ENCODE measurements at regions of chr13 and their contacts with region 1.

Region 1: GRCh38 chr13:65468628-65469027 is 1761.5 kb downstream of the PCDH9 start:
- DNase-seq: no peak
- ATAC-seq: peak; percentile 46; the same call in 2 of the 3 replicates
- H3K4me3 ChIP-seq: no peak overlapping the region
- H3K27ac ChIP-seq: no peak overlapping the region
- H3K4me1 ChIP-seq: no peaks in the 10 kb centered on the region
- H3K27me3 ChIP-seq: no peaks in the 10 kb centered on the region
- CTCF ChIP-seq: no peak
- EP300 ChIP-seq: no peak
- POLR2A ChIP-seq: no peak
- RAD21 ChIP-seq: no peak

Region 2: DNA sequence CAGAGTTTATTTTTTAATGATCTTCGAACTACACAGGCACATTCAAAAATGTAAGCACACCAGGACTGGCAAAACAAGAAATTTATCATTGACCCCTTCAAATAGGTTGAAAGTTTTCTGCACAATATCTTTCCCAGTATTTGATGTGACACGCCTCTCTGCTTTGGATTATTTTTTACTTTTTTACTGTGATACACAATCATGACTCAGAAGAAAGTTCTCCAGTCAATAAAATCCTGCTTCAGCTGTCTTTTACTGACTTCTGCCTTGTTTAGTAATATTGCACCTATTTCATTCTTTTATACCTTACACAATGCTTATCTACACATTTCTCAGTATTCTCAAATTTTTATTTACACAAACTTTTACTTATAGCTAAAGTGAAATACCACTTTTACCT is 11.1 kb after region 1 on chr13:
- CTCF ChIA-PET with region 1: interaction called, 4 read pairs
- POLR2A ChIA-PET with region 1: no interaction called
- RAD21 ChIA-PET with region 1: no interaction called
- SMC1A ChIA-PET with region 1: interaction called, 10 read pairs
- in situ Hi-C with region 1: no loop called
- intact Hi-C with region 1: no loop called
- DNase-seq: no peak
- ATAC-seq: no peak
- H3K4me3 ChIP-seq: no peak overlapping the region
- H3K27ac ChIP-seq: no peak overlapping the region
- H3K4me1 ChIP-seq: no peaks in the 10 kb centered on the region
- H3K27me3 ChIP-seq: no peaks in the 10 kb centered on the region
- CTCF ChIP-seq: no peak
- EP300 ChIP-seq: no peak
- POLR2A ChIP-seq: no peak
- RAD21 ChIP-seq: no peak

Region 3: DNA sequence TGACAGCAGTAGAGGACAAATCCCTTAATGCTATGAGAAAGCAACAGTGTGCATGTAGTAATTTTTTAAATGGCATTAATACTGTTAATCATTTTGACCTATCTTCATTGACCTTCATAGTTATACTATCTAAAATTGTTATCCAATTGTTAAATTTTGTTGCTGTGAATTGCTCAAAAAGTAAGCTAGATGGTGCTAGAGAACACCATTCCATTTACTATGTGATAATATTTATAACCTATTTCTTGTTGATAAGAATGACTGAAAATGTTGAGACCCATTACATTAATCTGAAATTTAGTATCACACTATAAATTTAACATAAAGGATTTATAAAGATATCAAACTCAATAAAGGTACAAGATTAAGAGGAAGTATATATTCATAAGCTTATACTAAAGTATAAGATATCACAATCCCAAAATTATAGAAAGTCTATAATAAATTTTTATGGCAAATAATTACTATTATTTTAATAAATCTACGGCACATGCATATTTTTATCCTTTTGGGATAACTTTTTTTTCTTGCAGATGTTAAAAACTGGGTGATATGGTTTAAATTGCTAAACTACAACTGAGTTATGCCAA is 188.2 kb after region 1 on chr13:
- CTCF ChIA-PET with region 1: no interaction called
- POLR2A ChIA-PET with region 1: no interaction called
- RAD21 ChIA-PET with region 1: no interaction called
- SMC1A ChIA-PET with region 1: no interaction called
- in situ Hi-C with region 1: no loop called
- intact Hi-C with region 1: no loop called
- DNase-seq: no peak
- ATAC-seq: peak; percentile 52; the same call in 1 of the 3 replicates
- H3K4me3 ChIP-seq: no peak overlapping the region
- H3K27ac ChIP-seq: no peak overlapping the region
- H3K4me1 ChIP-seq: no peaks in the 10 kb centered on the region
- H3K27me3 ChIP-seq: no peaks in the 10 kb centered on the region
- CTCF ChIP-seq: peak in 1 of 3 experiments; percentile 27; a peak in 3 of 6 replicates
- EP300 ChIP-seq: no peak
- POLR2A ChIP-seq: no peak
- RAD21 ChIP-seq: 0 out of 2 replicates have a peak, but pooled peaks have one; percentile 8

Region 4: DNA sequence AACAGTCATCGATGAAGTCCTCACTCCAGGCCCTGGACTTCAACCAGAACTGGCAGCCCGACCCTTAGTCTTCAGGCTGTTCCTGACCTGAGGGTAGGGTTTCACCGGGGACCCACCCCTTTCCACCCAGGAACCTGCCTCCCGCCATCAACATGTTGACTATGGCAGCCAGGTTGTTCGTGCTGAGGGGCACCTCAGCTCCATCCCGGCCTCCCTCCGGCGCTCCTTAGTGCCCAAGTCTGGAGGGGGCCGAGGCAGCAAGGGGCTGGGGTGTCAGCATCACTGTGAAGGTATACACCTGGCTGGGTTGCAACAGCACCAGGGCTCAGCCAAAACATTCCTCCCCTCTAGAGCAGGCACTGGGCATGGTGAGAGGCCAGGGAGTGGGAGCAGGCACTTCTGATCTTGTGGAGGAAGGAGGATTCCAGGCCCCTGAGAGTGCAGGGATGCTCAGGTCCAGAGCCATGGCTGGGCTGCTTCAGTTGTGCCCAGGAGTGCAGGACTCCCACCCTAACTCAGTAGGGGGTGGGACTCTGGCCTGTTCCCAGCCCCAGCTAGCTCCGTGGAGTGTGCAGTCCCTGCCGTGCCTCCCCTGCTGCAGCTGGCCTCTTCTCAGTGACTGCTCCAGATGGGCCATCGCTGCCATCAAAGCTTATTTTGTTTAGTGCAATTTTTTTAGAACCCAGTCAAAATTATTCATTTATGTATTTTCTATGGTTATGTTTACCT is 315.6 kb after region 1 on chr13:
- CTCF ChIA-PET with region 1: no interaction called
- POLR2A ChIA-PET with region 1: no interaction called
- RAD21 ChIA-PET with region 1: no interaction called
- SMC1A ChIA-PET with region 1: no interaction called
- in situ Hi-C with region 1: no loop called
- intact Hi-C with region 1: no loop called
- DNase-seq: no peak
- ATAC-seq: no peak
- H3K4me3 ChIP-seq: no peak overlapping the region
- H3K27ac ChIP-seq: no peak overlapping the region
- H3K4me1 ChIP-seq: no peaks in the 10 kb centered on the region
- H3K27me3 ChIP-seq: no peaks in the 10 kb centered on the region
- CTCF ChIP-seq: no peak
- EP300 ChIP-seq: no peak
- POLR2A ChIP-seq: no peak
- RAD21 ChIP-seq: no peak

Region 5: GRCh38 chr13:66180806-66181205 is 712.2 kb after region 1 on chr13:
- CTCF ChIA-PET with region 1: no interaction called
- POLR2A ChIA-PET with region 1: no interaction called
- RAD21 ChIA-PET with region 1: no interaction called
- SMC1A ChIA-PET with region 1: no interaction called
- in situ Hi-C with region 1: no loop called
- intact Hi-C with region 1: no loop called
- DNase-seq: no peak
- ATAC-seq: no peak
- H3K4me3 ChIP-seq: no peak overlapping the region
- H3K27ac ChIP-seq: no peak overlapping the region
- H3K4me1 ChIP-seq: no peaks in the 10 kb centered on the region
- H3K27me3 ChIP-seq: no peaks in the 10 kb centered on the region
- CTCF ChIP-seq: no peak
- EP300 ChIP-seq: no peak
- POLR2A ChIP-seq: no peak
- RAD21 ChIP-seq: no peak

Measured in GM12878 (cell line).